ENCODE measurements at regions of chr20 and their contacts with region 1.

Region 1: DNA sequence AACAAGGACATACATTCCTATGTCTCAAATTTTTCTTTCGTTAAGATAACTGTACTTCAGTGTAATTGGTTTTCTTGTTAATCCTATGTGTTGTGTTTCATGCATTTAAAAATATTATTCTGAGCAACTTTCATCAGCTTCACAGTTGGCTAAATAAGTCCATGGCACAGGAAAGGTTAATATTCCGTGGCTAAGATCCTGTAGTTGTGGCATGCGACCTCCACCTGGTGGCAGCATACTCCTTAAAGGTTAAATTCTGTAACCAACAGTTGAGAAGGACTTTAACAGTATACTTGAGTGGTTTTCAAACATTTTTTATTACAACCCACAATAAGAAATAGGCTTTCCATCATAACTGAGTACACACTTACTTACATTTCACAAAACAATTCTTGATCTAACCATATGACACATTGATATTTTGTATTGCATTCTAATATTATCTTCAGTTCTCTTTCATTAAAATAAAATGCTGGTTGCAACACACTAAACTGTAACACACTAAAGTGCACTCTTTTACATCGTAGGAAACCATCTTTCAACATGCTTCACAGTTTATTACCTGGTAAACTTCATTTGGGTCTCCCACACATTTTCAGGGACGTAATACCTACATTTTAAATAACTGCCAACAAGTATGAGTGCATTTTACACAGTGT is 118.3 kb downstream of the SLX4IP start:
- DNase-seq: no peak
- ATAC-seq: peak; percentile 77
- H3K4me3 ChIP-seq: no peak overlapping the region
- H3K27ac ChIP-seq: no peak overlapping the region
- H3K4me1 ChIP-seq: peaks cover 30% of the 10 kb centered on the region
- H3K27me3 ChIP-seq: no peaks in the 10 kb centered on the region
- CTCF ChIP-seq: peak; percentile 76 to 85 (median 83)
- EP300 ChIP-seq: no peak
- POLR2A ChIP-seq: no peak
- RAD21 ChIP-seq: peak; percentile 94

Region 2: DNA sequence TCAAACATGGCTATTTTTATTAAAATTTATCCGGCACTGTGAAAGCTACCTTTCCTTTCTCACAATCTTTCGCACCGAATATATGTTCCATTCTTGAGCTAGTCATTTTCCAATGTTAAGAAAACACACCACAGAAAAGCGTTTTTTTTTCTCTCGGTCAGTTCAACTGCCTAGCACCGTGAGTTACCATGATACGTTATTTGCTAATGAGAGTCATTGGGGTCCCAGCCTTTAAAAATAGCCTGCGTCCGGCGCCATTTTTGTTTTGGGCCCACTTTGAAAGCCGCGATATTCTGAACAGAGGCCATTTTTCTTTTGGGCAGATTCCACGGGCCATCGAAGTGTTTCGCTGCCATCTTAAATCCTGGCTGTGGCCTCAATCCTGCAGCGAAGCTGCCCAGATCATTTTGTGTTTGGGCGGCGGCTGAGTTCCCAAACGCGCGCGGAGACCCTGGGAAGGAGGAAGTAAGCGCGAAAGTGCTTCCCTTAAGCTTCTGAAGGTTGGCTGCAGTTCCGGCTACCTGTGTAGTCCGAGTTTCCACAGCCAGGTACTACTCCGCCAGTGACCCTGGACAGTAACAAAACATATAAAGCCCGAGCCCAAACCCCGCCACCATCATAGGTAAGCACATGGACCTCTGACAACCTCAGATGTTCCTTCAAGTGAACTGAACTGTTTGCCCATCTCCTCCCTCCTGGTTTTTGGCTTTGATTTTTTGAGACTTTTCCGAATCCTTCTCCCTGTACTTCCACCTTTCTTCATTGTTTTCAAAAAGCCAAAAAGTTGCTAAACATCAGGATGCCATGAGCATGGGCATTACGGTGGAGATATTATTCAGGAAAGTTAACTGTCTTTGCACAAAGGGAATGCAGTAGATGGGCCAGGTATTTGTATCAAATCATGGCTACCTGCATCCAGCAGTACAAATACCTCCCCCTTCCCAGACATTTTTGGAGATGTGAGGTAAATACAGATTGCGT is 118.3 kb before region 1 on chr20 and contains the start of gene SLX4IP:
- CTCF ChIA-PET with region 1: interaction called, 4 read pairs
- POLR2A ChIA-PET with region 1: interaction called, 3 read pairs
- RAD21 ChIA-PET with region 1: interaction called, 6 read pairs
- SMC1A ChIA-PET with region 1: interaction called, 5 read pairs
- in situ Hi-C with region 1: no loop called
- intact Hi-C with region 1: loop called (anchors 2 kb)
- DNase-seq: peak; percentile 88
- ATAC-seq: peak; percentile 75
- H3K4me3 ChIP-seq: peak within 1 kb of the TSS; percentile 97
- H3K27ac ChIP-seq: peak within 1 kb of the TSS; percentile 87
- H3K4me1 ChIP-seq: peaks cover 15% of the 10 kb centered on the region; the same call in 1 of the 2 replicates
- H3K27me3 ChIP-seq: no peaks in the 10 kb centered on the region
- CTCF ChIP-seq: no peak
- EP300 ChIP-seq: no peak
- POLR2A ChIP-seq: peak; percentile 81
- RAD21 ChIP-seq: no peak
- polyA plus RNA-seq, gene SLX4IP: 3.0 to 8.0 TPM

Region 3: DNA sequence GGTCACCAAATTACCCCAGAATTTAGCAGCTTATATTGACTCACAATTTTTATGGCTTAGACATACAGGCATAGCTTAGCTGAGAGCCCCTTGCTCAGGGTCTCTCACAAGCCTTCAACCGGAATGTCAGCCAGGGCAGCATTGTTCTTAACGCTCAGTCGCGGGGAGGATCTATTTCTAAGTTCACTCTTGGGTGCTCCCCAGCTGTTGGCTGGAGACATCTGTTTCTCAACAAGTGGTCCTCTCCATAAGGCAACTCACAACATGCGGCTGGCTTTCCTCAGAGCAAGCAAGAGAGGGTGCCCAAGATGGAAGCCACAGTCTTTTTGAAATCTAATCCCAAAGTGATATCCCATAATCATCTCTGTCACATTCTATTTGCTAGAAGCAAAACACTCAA is 71.8 kb before region 1 on chr20:
- CTCF ChIA-PET with region 1: interaction called, 16 read pairs
- POLR2A ChIA-PET with region 1: interaction called, 10 read pairs
- RAD21 ChIA-PET with region 1: interaction called, 22 read pairs
- SMC1A ChIA-PET with region 1: interaction called, 19 read pairs
- in situ Hi-C with region 1: no loop called
- intact Hi-C with region 1: no loop called
- DNase-seq: no peak
- ATAC-seq: no peak
- H3K4me3 ChIP-seq: no peak overlapping the region
- H3K27ac ChIP-seq: no peak overlapping the region
- H3K4me1 ChIP-seq: peaks cover 17% of the 10 kb centered on the region
- H3K27me3 ChIP-seq: no peaks in the 10 kb centered on the region
- CTCF ChIP-seq: no peak
- EP300 ChIP-seq: no peak
- POLR2A ChIP-seq: no peak
- RAD21 ChIP-seq: no peak

Region 4: GRCh38 chr20:10498200-10498599 is 55.3 kb before region 1 on chr20:
- CTCF ChIA-PET with region 1: no interaction called
- POLR2A ChIA-PET with region 1: no interaction called
- RAD21 ChIA-PET with region 1: no interaction called
- SMC1A ChIA-PET with region 1: no interaction called
- in situ Hi-C with region 1: no loop called
- intact Hi-C with region 1: no loop called
- DNase-seq: no peak
- ATAC-seq: peak; percentile 42
- H3K4me3 ChIP-seq: no peak overlapping the region
- H3K27ac ChIP-seq: no peak overlapping the region
- H3K4me1 ChIP-seq: no peaks in the 10 kb centered on the region
- H3K27me3 ChIP-seq: no peaks in the 10 kb centered on the region
- CTCF ChIP-seq: no peak
- EP300 ChIP-seq: no peak
- POLR2A ChIP-seq: no peak
- RAD21 ChIP-seq: no peak

Region 5: DNA sequence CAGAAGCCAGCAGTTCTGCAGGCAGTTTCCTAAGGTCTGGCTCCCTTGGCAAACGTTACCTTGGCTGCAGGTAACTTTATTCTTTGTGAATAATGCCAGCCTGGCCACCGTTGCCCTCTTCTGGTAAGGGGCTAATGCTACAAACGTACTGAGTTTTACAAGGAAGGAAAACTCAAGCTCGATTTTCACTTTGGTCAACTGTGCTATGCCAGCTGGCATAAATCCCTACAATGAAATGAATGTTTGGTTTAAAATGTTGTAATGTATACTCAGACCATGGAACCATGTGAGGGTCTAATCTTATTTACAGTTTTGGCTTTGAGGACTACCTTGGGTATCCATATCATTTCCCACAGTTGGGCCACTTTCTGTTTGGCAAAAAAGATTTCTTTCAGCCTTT is 16.9 kb before region 1 on chr20:
- CTCF ChIA-PET with region 1: interaction called, 8 read pairs
- POLR2A ChIA-PET with region 1: no interaction called
- RAD21 ChIA-PET with region 1: interaction called, 12 read pairs
- SMC1A ChIA-PET with region 1: interaction called, 5 read pairs
- in situ Hi-C with region 1: no loop called
- intact Hi-C with region 1: no loop called
- DNase-seq: no peak
- ATAC-seq: peak; percentile 74
- H3K4me3 ChIP-seq: no peak overlapping the region
- H3K27ac ChIP-seq: no peak overlapping the region
- H3K4me1 ChIP-seq: peaks cover 1% of the 10 kb centered on the region
- H3K27me3 ChIP-seq: no peaks in the 10 kb centered on the region
- CTCF ChIP-seq: peak; percentile 22 to 55 (median 54); a peak in 5 of 6 replicates
- EP300 ChIP-seq: no peak
- POLR2A ChIP-seq: no peak
- RAD21 ChIP-seq: peak; percentile 52; the same call in 1 of the 2 replicates

Region 6: GRCh38 chr20:10619427-10619826 is 66.0 kb after region 1 on chr20:
- CTCF ChIA-PET with region 1: no interaction called
- POLR2A ChIA-PET with region 1: no interaction called
- RAD21 ChIA-PET with region 1: no interaction called
- SMC1A ChIA-PET with region 1: no interaction called
- in situ Hi-C with region 1: no loop called
- intact Hi-C with region 1: no loop called
- DNase-seq: no peak
- ATAC-seq: no peak
- H3K4me3 ChIP-seq: no peak overlapping the region
- H3K27ac ChIP-seq: no peak overlapping the region
- H3K4me1 ChIP-seq: no peaks in the 10 kb centered on the region; the same call in 1 of the 2 replicates
- H3K27me3 ChIP-seq: no peaks in the 10 kb centered on the region
- CTCF ChIP-seq: no peak
- EP300 ChIP-seq: no peak
- POLR2A ChIP-seq: no peak
- RAD21 ChIP-seq: no peak

Region 7: DNA sequence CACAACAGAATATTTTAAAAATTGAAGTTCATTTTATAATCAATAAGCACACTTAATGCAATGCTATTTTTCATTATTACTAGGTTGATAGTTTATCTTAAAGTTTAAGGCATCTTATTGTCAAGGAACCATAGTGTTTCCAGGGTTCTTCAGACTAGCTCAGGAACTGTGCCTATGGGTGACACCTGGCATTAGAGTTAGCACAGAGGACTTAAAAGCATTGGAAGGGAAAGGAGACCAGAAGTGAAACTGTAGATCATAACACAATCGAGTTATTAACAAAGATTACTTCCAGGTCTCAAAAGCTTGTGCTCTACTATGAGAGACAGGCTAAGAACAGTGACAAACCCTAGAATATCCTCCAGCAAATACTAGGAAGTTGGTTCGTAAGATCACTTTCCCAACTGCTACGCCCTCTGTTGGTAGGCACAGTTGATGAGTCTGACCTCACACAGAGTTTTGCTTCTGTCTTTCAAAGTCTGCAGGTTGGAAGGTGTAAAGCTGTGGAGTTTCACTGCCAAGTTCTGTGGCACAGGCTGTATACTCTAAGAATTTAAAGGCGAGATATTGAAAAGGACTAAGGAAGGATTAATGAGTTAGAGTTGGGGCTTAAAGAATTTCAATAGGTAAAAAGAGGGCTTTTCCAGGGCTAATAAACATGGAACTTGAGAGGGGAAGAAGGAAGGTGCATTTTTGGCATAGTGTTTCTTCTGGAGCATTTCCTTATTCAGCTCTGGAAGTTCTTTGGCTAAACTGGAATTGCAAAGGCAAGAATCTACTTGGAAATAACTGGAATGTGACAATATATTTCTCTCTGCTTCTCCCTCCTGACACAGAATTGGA is 651.7 kb after region 1 on chr20:
- CTCF ChIA-PET with region 1: interaction called, 5 read pairs
- POLR2A ChIA-PET with region 1: interaction called, 3 read pairs
- RAD21 ChIA-PET with region 1: interaction called, 3 read pairs
- SMC1A ChIA-PET with region 1: interaction called, 10 read pairs
- in situ Hi-C with region 1: loop called (anchors 10 kb)
- intact Hi-C with region 1: loop called (anchors 2 kb)
- DNase-seq: peak; percentile 50
- ATAC-seq: peak; percentile 99
- H3K4me3 ChIP-seq: no peak overlapping the region
- H3K27ac ChIP-seq: no peak overlapping the region
- H3K4me1 ChIP-seq: no peaks in the 10 kb centered on the region
- H3K27me3 ChIP-seq: no peaks in the 10 kb centered on the region; a peak in 1 of 4 replicates
- CTCF ChIP-seq: peak; percentile 80 to 89 (median 84)
- EP300 ChIP-seq: no peak
- POLR2A ChIP-seq: no peak
- RAD21 ChIP-seq: peak; percentile 81

Region 8: DNA sequence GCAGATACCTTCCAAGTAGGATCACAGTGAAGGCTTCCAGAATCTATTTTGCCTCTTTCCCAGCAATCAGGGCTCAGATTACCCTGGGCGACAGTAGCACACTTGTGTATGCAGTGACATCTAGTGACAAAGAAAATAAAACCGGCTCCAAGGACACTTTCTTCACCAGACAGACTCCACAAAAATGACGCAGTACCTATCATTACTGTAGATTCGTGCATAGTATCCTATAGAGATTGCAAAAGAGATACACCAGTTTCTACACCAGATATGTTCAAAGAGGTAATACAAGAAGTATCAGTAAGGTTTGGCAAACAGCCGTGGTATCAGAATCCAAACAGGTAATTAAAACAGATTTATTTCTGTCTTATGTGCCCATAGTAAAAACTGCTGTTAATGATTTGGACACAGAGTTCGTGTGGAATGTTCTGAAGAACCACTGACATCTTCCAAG is 720.7 kb after region 1 on chr20:
- CTCF ChIA-PET with region 1: interaction called, 6 read pairs
- POLR2A ChIA-PET with region 1: no interaction called
- RAD21 ChIA-PET with region 1: interaction called, 8 read pairs
- SMC1A ChIA-PET with region 1: interaction called, 6 read pairs
- in situ Hi-C with region 1: loop called (anchors 5 kb)
- intact Hi-C with region 1: loop called (anchors 1 kb)
- DNase-seq: no peak
- ATAC-seq: peak; percentile 94
- H3K4me3 ChIP-seq: no peak overlapping the region
- H3K27ac ChIP-seq: no peak overlapping the region
- H3K4me1 ChIP-seq: no peaks in the 10 kb centered on the region; the same call in 1 of the 2 replicates
- H3K27me3 ChIP-seq: no peaks in the 10 kb centered on the region
- CTCF ChIP-seq: peak; percentile 51 to 84 (median 54); a peak in 5 of 6 replicates
- EP300 ChIP-seq: no peak
- POLR2A ChIP-seq: no peak
- RAD21 ChIP-seq: peak; percentile 94

Region 9: GRCh38 chr20:11544029-11544678 is 990.7 kb after region 1 on chr20:
- CTCF ChIA-PET with region 1: interaction called, 18 read pairs
- POLR2A ChIA-PET with region 1: no interaction called
- RAD21 ChIA-PET with region 1: interaction called, 15 read pairs
- SMC1A ChIA-PET with region 1: interaction called, 16 read pairs
- in situ Hi-C with region 1: loop called (anchors 5 kb)
- intact Hi-C with region 1: loop called (anchors 2 kb)
- DNase-seq: peak; percentile 40
- ATAC-seq: peak; percentile 97
- H3K4me3 ChIP-seq: no peak overlapping the region
- H3K27ac ChIP-seq: no peak overlapping the region
- H3K4me1 ChIP-seq: no peaks in the 10 kb centered on the region
- H3K27me3 ChIP-seq: no peaks in the 10 kb centered on the region
- CTCF ChIP-seq: peak; percentile 33 to 76 (median 39); a peak in 4 of 6 replicates
- EP300 ChIP-seq: no peak
- POLR2A ChIP-seq: no peak
- RAD21 ChIP-seq: peak; percentile 86

Measured in GM12878 (cell line).